ENCODE measurements at regions of chr6 and their contacts with region 1.

Region 1: GRCh38 chr6:106334646-106335448 is 9.3 kb upstream of the ATG5 start:
- DNase-seq: peak; percentile 58
- H3K4me3 Mint-ChIP-seq: no peak overlapping the region
- H3K27ac Mint-ChIP-seq: no peak overlapping the region
- H3K4me1 Mint-ChIP-seq: peaks cover 7% of the 10 kb centered on the region
- H3K27me3 Mint-ChIP-seq: peaks cover 44% of the 10 kb centered on the region

Region 2: GRCh38 chr6:106347341-106347740 is 12.5 kb after region 1 on chr6:
- CTCF ChIA-PET with region 1: interaction called, 11 read pairs
- POLR2A ChIA-PET with region 1: no interaction called
- DNase-seq: no peak
- H3K4me3 Mint-ChIP-seq: no peak overlapping the region
- H3K27ac Mint-ChIP-seq: no peak overlapping the region
- H3K4me1 Mint-ChIP-seq: no peaks in the 10 kb centered on the region
- H3K27me3 Mint-ChIP-seq: peaks cover 27% of the 10 kb centered on the region

Region 3: GRCh38 chr6:106377061-106377540 is 42.3 kb after region 1 on chr6:
- CTCF ChIA-PET with region 1: no interaction called
- POLR2A ChIA-PET with region 1: no interaction called
- DNase-seq: no peak
- H3K4me3 Mint-ChIP-seq: no peak overlapping the region
- H3K27ac Mint-ChIP-seq: no peak overlapping the region
- H3K4me1 Mint-ChIP-seq: peaks cover 23% of the 10 kb centered on the region
- H3K27me3 Mint-ChIP-seq: peaks cover 1% of the 10 kb centered on the region

Region 4: DNA sequence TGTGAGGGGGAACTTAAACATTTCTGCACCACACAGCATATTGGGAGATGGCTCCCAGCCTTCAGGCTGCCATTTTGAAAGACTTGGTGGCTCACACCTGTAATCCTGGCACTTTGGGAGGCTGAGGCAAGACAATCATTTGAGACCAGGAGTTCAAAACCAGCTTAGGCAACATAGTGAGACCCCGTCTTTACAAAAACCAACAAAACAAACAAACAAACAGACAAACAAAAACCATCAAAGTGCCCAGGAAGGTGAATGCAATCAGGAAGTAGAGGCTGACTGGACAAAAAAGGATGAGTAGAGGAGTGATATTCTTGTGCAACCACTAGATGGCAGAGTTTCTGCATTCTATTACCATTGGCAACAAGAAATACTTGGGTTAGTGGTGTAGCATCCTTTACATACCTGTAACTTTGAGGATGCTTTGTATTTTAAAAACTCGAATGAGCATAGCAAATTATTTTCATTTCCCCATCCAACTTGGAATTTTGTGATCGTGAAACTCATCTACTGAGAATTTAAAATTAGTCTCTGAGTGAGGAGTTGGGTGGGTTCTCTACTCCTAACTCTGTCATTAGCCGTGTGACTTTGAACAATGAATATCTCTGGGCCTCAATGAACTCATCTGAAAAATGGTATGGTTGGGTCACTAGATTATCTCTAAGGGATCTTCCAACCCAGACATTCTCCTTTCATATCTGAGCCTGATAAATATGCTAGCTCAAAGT is 110.1 kb after region 1 on chr6:
- CTCF ChIA-PET with region 1: interaction called, 13 read pairs
- POLR2A ChIA-PET with region 1: no interaction called
- DNase-seq: peak; percentile 47
- H3K4me3 Mint-ChIP-seq: no peak overlapping the region
- H3K27ac Mint-ChIP-seq: no peak overlapping the region
- H3K4me1 Mint-ChIP-seq: peaks cover 18% of the 10 kb centered on the region
- H3K27me3 Mint-ChIP-seq: peaks cover 28% of the 10 kb centered on the region